AG04449 (cell line): ENCODE measurements at regions of chr17 and their contacts with region 1.

Region 1: DNA sequence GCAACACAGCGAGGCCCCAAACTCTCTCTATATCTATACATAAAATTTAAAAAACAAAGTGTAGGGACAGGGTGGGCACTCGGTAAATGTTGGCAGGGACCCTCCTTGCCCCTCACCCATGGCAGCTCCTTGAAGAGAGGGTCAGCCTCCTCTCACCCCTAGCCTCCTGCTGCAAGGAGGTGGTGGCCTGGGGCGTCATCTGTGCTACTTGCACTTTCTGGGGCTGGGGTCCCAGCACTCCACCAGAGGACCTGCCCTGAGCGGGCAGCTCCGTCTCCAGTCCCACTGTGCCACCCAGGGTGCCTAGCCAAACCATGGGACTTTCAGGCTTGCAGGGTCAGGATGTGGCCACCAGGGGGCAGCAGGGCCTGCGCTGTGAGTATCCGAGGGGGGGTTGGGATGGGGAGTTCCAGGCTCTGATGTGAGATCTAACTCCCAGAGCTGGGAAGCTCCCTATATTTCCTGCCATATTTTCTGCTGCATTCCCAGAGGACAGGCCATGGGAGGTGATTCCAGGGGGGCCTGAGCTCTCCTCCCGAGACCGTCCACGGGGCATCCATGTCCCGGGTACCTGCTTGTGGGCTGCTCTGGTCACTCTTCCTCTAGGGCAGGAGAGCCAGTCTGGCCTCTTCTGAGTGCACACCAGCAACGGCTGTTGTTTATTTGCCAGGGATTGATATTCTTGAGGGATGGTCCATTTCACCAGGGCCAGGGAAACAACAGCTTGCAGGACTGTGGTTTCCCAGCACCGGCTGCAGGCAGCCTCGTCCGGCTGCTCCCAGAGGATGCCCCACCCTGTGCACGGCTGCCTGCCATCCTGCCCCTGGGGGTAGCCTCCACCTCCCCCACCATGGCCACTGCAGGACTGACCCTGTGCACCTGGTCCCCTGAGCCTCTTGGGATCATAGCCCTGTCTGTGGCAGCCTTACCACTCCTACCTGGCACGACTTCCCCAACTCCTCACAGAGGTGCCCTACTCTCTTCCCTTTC is 1.1 kb downstream of the GPR142 start:
- DNase-seq: no peak
- H3K4me3 ChIP-seq: no peak overlapping the region
- CTCF ChIP-seq: peak; percentile 92

Region 2: DNA sequence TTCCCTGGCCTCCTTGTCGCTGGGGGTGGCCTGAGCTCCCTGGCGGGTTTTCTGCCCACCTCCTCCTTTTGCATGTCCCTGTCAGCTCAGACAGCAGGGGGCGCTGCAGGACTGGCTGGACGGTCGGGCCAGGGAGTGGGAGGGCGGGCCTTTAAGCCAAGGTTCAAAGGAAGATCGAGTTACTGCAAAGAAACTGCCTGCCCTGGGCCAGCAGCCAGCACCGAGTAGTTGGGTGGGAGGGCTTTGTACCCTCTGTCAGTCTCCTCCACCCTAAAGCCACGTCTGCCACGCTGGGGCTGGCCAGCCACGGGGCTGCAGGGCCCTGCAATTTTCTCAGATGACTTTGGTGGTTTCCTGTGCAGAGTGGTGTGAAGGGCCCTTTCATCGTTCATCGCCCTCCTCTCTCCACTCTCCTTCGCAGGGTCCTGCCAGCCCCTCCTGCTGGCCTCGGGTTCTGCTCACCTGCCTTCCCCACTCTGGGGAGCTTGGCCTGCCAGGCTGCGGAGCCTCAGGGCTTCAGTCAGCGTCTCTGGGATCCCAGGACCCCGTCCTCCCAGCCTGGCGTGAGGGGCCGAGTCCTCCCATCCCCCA is 11.2 kb after region 1 on chr17:
- CTCF ChIA-PET with region 1: interaction called, 74 read pairs
- POLR2A ChIA-PET with region 1: no interaction called
- DNase-seq: no peak
- H3K4me3 ChIP-seq: no peak overlapping the region
- CTCF ChIP-seq: peak; percentile 94